Esophagus muscularis mucosa (tissue), 4 donors: ENCODE measurements at regions of chr4 and their contacts with region 1.

Region 1: GRCh38 chr4:39134683-39135319 is 47.5 kb upstream of the WDR19 start:
- DNase-seq: no peak
- H3K4me3 ChIP-seq: no peak overlapping the region
- H3K27ac ChIP-seq: no peak overlapping the region
- H3K4me1 ChIP-seq: peaks cover 8 to 11% (median 8%) of the 10 kb centered on the region in 4 donors
- H3K27me3 ChIP-seq: no peaks in the 10 kb centered on the region
- CTCF ChIP-seq: no peak
- EP300 ChIP-seq: no peak
- POLR2A ChIP-seq: no peak

Region 2: DNA sequence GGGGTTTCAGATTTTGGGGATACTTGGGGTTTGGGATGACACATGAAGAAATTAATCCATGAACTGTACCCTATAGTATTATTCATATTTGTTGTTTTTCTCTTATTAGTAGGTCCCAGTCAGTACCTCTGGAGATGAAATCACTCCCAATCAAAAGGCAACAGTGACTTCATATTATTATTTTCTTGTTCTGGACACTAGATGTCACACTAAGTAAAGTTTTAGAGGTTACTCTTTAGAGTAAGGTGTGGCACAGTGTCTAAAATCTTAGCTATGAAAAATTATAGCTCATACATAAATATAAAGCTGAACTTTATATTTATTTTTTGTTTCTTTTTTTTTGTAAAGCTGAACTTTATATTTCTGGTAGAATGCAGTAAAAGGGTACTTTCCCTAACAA is 232.1 kb before region 1 on chr4:
- intact Hi-C with region 1: loop called (anchors 1 kb)
- DNase-seq: no peak
- H3K4me3 ChIP-seq: no peak overlapping the region
- H3K27ac ChIP-seq: no peak overlapping the region
- H3K4me1 ChIP-seq: peaks cover 0 to 42% (median 29%) of the 10 kb centered on the region in 4 donors
- H3K27me3 ChIP-seq: no peaks in the 10 kb centered on the region
- CTCF ChIP-seq: peak; percentile 40 to 52 (median 47)
- EP300 ChIP-seq: no peak
- POLR2A ChIP-seq: no peak